B cell (primary cell): ENCODE measurements at regions of chr3 and their contacts with region 1.

Region 1: GRCh38 chr3:125310623-125311081 is 64.5 kb downstream of the ZNF148 start:
- DNase-seq: peak; percentile 44
- ATAC-seq: no peak
- H3K4me3 ChIP-seq: peak overlapping the region in 4 of 5 experiments; percentile 7 to 45 (median 29)
- H3K4me3 Mint-ChIP-seq: peak overlapping the region; percentile 89
- H3K27ac ChIP-seq: peak overlapping the region; percentile 11 to 64
- H3K27ac Mint-ChIP-seq: peak overlapping the region; percentile 71
- H3K4me1 ChIP-seq: peaks cover 4 to 6% of the 10 kb centered on the region in 2 donors
- H3K4me1 Mint-ChIP-seq: peaks cover 32% of the 10 kb centered on the region
- H3K27me3 ChIP-seq: no peaks in the 10 kb centered on the region
- H3K27me3 Mint-ChIP-seq: no peaks in the 10 kb centered on the region
- CTCF ChIP-seq: no peak

Region 2: DNA sequence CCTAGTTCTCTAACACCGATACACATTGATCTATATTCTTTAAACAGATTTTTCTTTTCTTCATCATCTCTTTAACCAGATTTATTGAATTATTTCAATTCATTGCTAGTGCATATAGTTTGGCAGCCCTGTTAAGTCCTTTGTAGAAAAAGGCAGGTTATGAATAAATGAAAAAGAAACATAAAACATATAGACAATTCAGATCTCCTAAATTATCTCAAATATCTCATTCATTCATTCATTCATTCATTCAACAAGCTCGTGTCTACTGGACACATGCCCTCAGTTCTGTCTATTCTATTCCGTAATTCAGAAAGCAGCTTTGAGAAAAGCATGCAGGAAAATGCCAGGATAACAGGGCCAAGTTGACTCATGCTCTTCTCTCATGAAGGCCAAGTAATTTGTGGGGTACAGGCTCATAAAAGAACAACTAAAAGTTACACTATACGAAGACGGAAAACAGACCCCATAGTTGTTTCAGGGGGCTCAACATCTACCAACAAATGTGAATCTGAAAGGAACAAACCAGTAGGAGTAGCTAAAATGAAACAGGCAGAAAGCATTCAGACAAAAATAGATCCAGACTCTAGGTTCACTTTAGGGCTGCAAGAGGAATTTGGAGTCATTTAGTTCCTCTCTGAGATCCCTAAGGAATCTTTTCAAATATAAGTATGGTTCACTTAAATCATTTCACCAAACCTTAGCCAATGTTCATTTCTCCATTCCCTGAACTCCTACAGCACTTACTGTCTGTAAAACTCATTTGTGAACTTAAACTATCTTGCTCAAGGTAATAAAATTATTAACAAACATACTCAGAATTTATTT is 57.0 kb after region 1 on chr3:
- CTCF ChIA-PET with region 1: no interaction called
- POLR2A ChIA-PET with region 1: no interaction called
- intact Hi-C with region 1: loop called (anchors 10 kb)
- DNase-seq: no peak
- ATAC-seq: no peak
- H3K4me3 ChIP-seq: no peak overlapping the region
- H3K4me3 Mint-ChIP-seq: no peak overlapping the region
- H3K27ac ChIP-seq: no peak overlapping the region
- H3K27ac Mint-ChIP-seq: no peak overlapping the region
- H3K4me1 ChIP-seq: no peaks in the 10 kb centered on the region
- H3K4me1 Mint-ChIP-seq: peaks cover 61% of the 10 kb centered on the region
- H3K27me3 ChIP-seq: no peaks in the 10 kb centered on the region
- H3K27me3 Mint-ChIP-seq: no peaks in the 10 kb centered on the region
- CTCF ChIP-seq: no peak